ENCODE measurements at regions of chr7 and their contacts with region 1.

Region 1: DNA sequence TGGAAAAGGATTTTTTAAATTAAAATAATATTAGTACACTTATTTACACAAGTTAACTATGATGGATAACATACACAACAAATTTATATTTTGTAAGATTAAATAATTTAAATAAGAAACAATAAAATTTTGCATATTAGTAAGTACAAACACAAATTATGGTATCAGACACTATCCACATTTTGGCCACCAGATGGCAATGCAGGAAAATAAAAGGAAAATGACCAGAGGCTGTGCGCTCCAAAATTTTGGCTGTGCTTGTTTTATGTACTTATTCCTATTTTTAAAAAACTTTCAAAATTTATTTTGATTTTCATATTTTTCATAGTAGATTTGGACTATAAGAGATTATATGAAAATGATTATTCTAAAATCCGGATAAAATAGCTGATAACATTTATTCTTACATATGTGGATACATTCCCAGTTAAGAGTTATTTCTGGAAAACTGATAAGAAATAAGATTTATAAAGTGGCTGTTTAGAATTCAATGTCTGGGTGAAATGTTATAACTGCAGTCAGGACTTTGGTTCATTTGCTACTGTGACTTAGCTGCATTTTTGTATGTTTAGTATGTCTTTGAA is 274.7 kb upstream of the HGF start:
- DNase-seq: peak in 4 of 10 donors; percentile 43 to 67 (median 53)
- H3K4me3 ChIP-seq: no peak overlapping the region
- H3K27ac ChIP-seq: no peak overlapping the region
- H3K27me3 ChIP-seq: no peaks in the 10 kb centered on the region
- CTCF ChIP-seq: peak; percentile 72 to 98 (median 90)

Region 2: DNA sequence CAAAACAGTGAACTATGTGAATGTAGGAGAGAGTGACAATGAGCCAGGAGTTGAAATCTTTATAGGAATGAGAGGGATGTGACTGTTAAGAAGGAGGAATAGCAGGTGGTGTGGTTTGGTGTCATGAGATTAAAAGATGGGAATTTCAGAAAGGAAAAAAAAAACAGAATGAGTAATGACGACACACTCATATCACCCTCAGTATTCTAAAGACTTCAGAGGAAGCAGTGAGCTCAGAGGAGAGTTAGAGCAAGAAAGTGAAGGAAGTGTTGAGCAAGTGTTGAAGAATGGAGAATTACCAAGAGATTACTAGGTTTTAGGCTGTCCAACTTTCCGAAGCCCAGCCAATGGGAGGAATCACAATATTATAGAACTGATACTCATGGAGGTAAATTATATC is 54.2 kb before region 1 on chr7:
- intact Hi-C with region 1: no loop called
- DNase-seq: no peak
- H3K4me3 ChIP-seq: no peak overlapping the region
- H3K27ac ChIP-seq: no peak overlapping the region
- H3K27me3 ChIP-seq: no peaks in the 10 kb centered on the region
- CTCF ChIP-seq: no peak

Region 3: DNA sequence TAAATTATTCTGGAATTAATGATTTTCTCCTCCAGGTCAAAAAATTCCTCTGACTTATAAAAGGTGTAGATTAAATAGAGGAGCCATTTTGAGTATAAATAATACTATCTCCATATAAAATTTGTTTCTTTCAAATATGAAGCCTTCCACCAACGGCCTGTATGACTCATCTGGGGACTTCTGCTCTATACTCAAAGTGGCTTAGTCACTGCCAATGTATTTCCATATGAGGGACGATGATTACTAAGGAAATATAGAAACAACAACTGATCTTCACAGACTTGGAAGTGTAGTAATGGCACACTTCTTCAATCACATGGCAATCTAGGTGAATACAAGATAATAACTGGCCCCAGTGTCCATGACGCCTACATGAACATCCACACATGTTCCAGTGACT is 60.9 kb after region 1 on chr7:
- intact Hi-C with region 1: no loop called
- DNase-seq: no peak
- H3K4me3 ChIP-seq: no peak overlapping the region
- H3K27ac ChIP-seq: no peak overlapping the region
- H3K27me3 ChIP-seq: no peaks in the 10 kb centered on the region
- CTCF ChIP-seq: no peak

Region 4: GRCh38 chr7:82164813-82165212 is 120.2 kb after region 1 on chr7:
- intact Hi-C with region 1: loop called in 1 of 2 experiments (anchors 5 kb)
- DNase-seq: peak in 2 of 10 donors; percentile 34 to 48
- H3K4me3 ChIP-seq: peak overlapping the region in 25 of 59 donors; percentile 0 to 43 (median 20)
- H3K27ac ChIP-seq: peak overlapping the region in 57 of 59 donors; percentile 39 to 94 (median 86)
- H3K27me3 ChIP-seq: no peaks in the 10 kb centered on the region
- CTCF ChIP-seq: peak; percentile 18 to 79 (median 60)

Region 5: GRCh38 chr7:82481499-82482097 is 437.0 kb after region 1 on chr7:
- intact Hi-C with region 1: loop called in 1 of 2 experiments (anchors 10 kb)
- DNase-seq: no peak
- H3K4me3 ChIP-seq: no peak overlapping the region
- H3K27ac ChIP-seq: no peak overlapping the region
- H3K27me3 ChIP-seq: no peaks in the 10 kb centered on the region
- CTCF ChIP-seq: peak; percentile 72 to 97 (median 84)

Region 6: GRCh38 chr7:82572195-82572880 is 527.7 kb after region 1 on chr7:
- intact Hi-C with region 1: loop called (anchors 5 kb)
- DNase-seq: peak; percentile 68 to 92 (median 86)
- H3K4me3 ChIP-seq: peak overlapping the region in 43 of 59 donors; percentile 2 to 50 (median 30)
- H3K27ac ChIP-seq: peak overlapping the region in 7 of 59 donors; percentile 5 to 70 (median 32)
- H3K27me3 ChIP-seq: no peaks in the 10 kb centered on the region
- CTCF ChIP-seq: peak; percentile 85 to 100 (median 94)

Region 7: GRCh38 chr7:82578430-82578829 is 533.8 kb after region 1 on chr7:
- intact Hi-C with region 1: loop called (anchors 5 kb)
- DNase-seq: no peak
- H3K4me3 ChIP-seq: no peak overlapping the region
- H3K27ac ChIP-seq: peak overlapping the region in 1 of 59 donors; percentile 6
- H3K27me3 ChIP-seq: no peaks in the 10 kb centered on the region
- CTCF ChIP-seq: no peak

Region 8: GRCh38 chr7:82600531-82600930 is 555.9 kb after region 1 on chr7:
- intact Hi-C with region 1: loop called in 1 of 2 experiments (anchors 5 kb)
- DNase-seq: no peak
- H3K4me3 ChIP-seq: peak overlapping the region in 17 of 59 donors; percentile 1 to 47 (median 18)
- H3K27ac ChIP-seq: peak overlapping the region in 55 of 59 donors; percentile 10 to 89 (median 75)
- H3K27me3 ChIP-seq: no peaks in the 10 kb centered on the region
- CTCF ChIP-seq: peak in 8 of 56 donors; percentile 6 to 18 (median 12)

Region 9: GRCh38 chr7:82729172-82730030 is 684.8 kb after region 1 on chr7:
- intact Hi-C with region 1: loop called in 1 of 2 experiments (anchors 10 kb)
- DNase-seq: no peak
- H3K4me3 ChIP-seq: no peak overlapping the region
- H3K27ac ChIP-seq: no peak overlapping the region
- H3K27me3 ChIP-seq: no peaks in the 10 kb centered on the region
- CTCF ChIP-seq: peak in 54 of 56 donors; percentile 17 to 64 (median 46)